K562 (cell line): ENCODE measurements at regions of chr3 and their contacts with region 1.

Region 1: GRCh38 chr3:46717447-46718231 is at the start of gene PRSS50:
- DNase-seq: peak; percentile 62 to 93 (median 87)
- ATAC-seq: peak; percentile 98
- H3K4me3 ChIP-seq: no peak within 1 kb of the TSS
- H3K27ac ChIP-seq: no peak within 1 kb of the TSS
- H3K4me1 ChIP-seq: peaks cover 0 to 10% of the 10 kb centered on the region in 2 experiments; a peak in 1 of 5 replicates
- H3K27me3 ChIP-seq: peaks cover 15 to 66% of the 10 kb centered on the region in 2 experiments
- CTCF ChIP-seq: peak; percentile 90 to 100 (median 99)
- EP300 ChIP-seq: no peak
- POLR2A ChIP-seq: no peak
- RAD21 ChIP-seq: peak in 1 of 2 experiments; percentile 51; a peak in 2 of 4 replicates
- polyA plus RNA-seq, gene PRSS50: 0.01 TPM in 1 of 2 experiments, not detected in the other

Region 2: GRCh38 chr3:46449755-46450552 is 267.7 kb before region 1 on chr3:
- CTCF ChIA-PET with region 1: no interaction called
- POLR2A ChIA-PET with region 1: no interaction called
- in situ Hi-C with region 1: no loop called
- intact Hi-C with region 1: no loop called
- DNase-seq: peak; percentile 51 to 75 (median 69)
- ATAC-seq: peak; percentile 82
- H3K4me3 ChIP-seq: no peak overlapping the region
- H3K27ac ChIP-seq: no peak overlapping the region
- H3K4me1 ChIP-seq: peaks cover 0 to 3% of the 10 kb centered on the region in 2 experiments; a peak in 1 of 5 replicates
- H3K27me3 ChIP-seq: peaks cover 42 to 66% of the 10 kb centered on the region in 2 experiments
- CTCF ChIP-seq: peak; percentile 68 to 91 (median 74)
- EP300 ChIP-seq: no peak
- POLR2A ChIP-seq: no peak
- RAD21 ChIP-seq: peak in 1 of 2 experiments; percentile 38; a peak in 2 of 4 replicates

Region 3: GRCh38 chr3:46646700-46647099 is 70.9 kb before region 1 on chr3:
- CTCF ChIA-PET with region 1: no interaction called
- POLR2A ChIA-PET with region 1: no interaction called
- in situ Hi-C with region 1: no loop called
- intact Hi-C with region 1: no loop called
- DNase-seq: no peak
- ATAC-seq: no peak
- H3K4me3 ChIP-seq: no peak overlapping the region
- H3K27ac ChIP-seq: no peak overlapping the region
- H3K4me1 ChIP-seq: no peaks in the 10 kb centered on the region
- H3K27me3 ChIP-seq: peaks cover 0 to 7% of the 10 kb centered on the region in 2 experiments; a peak in 2 of 5 replicates
- CTCF ChIP-seq: no peak
- EP300 ChIP-seq: no peak
- POLR2A ChIP-seq: no peak
- RAD21 ChIP-seq: no peak

Region 4: GRCh38 chr3:47359323-47359722 is 641.7 kb after region 1 on chr3:
- CTCF ChIA-PET with region 1: no interaction called
- POLR2A ChIA-PET with region 1: no interaction called
- in situ Hi-C with region 1: loop called (anchors 10 kb)
- intact Hi-C with region 1: no loop called
- DNase-seq: no peak
- ATAC-seq: no peak
- H3K4me3 ChIP-seq: no peak overlapping the region
- H3K27ac ChIP-seq: no peak overlapping the region
- H3K4me1 ChIP-seq: peaks cover 0 to 3% of the 10 kb centered on the region in 2 experiments; a peak in 1 of 5 replicates
- H3K27me3 ChIP-seq: no peaks in the 10 kb centered on the region
- CTCF ChIP-seq: no peak
- EP300 ChIP-seq: no peak
- POLR2A ChIP-seq: no peak
- RAD21 ChIP-seq: no peak